Posterior cingulate gyrus (tissue), 11 donors: ENCODE measurements at regions of chr12 and their contacts with region 1.

Region 1: DNA sequence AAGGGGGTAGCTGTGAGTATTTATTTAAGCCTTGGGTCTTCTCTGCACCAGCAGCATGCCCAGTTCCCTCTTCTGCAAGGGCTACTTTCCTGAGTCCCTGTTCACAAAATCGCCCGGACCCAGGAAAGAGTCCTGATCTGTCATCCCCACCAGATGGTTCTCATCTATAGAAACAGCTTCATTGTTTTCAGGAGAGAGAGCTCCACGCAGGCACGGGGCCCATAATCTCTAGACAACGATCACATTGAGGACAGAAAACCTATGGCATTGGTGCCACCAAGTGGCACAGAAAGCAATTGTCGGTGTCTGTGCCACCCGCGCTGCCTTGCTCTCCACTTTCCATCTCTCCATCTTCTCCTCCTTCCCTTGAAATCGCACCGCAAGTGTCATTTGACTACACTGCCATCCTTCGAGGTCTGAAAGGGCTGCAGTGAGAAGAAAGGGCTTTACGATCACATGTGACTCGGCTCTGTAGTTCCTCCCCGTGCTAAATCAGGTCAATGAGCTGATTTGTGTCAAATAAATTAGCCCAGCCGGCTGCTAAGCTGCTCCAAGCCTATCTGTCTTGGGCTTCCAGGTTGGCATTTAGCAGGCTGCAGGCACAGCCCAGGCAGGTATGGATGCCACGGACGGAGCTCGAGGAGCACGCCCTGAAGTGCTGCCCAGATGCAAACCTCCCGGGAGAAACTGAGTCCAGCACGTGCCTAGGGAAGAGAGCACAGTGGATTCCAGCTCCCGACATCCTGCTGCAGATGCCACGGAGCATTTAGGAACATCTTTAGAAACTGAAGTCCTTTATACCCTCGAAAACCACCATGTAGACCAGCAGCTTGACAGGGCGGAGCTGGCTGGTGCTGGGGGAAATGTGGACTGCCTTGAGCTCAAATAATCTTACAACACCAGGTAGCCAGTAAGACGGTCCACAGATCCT is 28.8 kb downstream of the SPRING1 start:
- DNase-seq: peak; percentile 71 to 97 (median 86)

Region 2: DNA sequence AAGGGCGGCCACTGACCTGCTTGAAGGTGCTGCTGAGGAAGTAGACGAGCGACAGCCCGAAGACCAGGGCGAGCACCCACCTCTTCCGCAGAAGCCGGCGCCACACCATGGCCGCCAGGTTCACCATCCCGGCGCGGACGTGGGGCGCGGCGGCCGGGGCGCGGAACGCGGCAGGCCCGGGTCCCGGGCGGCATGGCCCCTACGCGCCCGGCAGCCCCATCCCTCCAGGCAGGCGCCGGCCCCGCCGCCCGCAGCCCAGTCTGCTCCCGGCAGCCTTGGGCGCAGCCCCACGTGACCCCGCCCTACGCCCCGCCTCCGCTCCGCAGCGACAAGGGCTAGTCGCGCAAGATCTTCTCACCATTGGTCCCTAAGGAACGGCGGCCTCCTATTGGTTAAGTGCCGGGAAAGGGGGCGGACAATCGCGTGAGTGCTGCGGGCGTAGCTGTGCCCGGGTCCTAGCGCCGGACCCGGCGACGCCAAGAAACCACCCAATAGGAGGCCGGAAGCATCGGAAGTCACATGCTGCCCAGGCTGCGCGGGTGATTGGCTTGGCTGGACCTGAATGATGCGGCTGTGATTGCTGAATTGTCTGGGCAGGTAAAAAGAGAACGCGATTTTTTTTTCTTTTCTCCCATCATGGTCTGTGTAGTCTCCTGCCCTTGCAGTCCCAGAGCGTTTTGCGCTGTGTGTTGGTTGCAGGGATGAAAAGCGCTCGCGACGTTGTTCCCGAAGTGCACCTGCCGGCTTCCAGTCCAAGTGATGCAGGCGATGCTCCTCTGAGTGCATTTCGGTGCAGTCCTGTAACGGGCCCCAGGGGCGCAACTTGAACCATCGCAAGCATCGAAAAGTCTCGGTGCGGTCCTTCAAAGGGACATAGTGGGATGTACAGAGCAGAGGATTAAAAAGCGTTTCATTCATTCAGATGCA is 28.9 kb after region 1 on chr12 and contains the starts of genes RNFT2 and SPRING1:
- intact Hi-C with region 1: loop called (anchors 2 kb)
- DNase-seq: peak; percentile 99 to 100 (median 100)

Region 3: DNA sequence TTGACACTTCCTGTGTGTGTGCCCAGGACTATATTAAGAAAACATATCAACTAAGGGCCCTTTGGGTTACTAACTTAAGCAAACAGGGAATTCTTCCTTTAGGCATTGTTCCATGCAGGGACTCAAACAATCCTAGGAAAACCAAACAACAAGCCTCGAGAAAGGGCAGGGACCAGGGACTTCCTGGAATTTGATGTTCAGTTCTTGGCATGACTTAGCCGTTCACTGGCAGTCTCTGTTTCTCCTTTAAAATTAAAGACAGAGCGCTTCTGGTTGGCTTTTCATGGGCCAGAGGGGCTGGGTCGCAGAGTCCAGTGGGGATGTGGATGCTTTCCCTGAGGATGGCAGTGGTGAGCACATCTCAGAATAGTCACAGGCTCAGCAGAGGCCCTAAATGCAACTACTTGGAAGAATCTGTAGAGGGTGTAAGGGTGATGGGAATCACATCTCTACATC is 64.2 kb after region 1 on chr12:
- intact Hi-C with region 1: no loop called
- DNase-seq: no peak